ENCODE measurements at regions of chr17 and their contacts with region 1.

Region 1: GRCh38 chr17:78369791-78370381 is 8.6 kb upstream of the PGS1 start:
- DNase-seq: no peak
- ATAC-seq: no peak
- H3K4me3 ChIP-seq: no peak overlapping the region
- H3K27ac ChIP-seq: no peak overlapping the region
- H3K4me1 ChIP-seq: peaks cover 10% of the 10 kb centered on the region
- H3K27me3 ChIP-seq: no peaks in the 10 kb centered on the region
- CTCF ChIP-seq: no peak

Region 2: DNA sequence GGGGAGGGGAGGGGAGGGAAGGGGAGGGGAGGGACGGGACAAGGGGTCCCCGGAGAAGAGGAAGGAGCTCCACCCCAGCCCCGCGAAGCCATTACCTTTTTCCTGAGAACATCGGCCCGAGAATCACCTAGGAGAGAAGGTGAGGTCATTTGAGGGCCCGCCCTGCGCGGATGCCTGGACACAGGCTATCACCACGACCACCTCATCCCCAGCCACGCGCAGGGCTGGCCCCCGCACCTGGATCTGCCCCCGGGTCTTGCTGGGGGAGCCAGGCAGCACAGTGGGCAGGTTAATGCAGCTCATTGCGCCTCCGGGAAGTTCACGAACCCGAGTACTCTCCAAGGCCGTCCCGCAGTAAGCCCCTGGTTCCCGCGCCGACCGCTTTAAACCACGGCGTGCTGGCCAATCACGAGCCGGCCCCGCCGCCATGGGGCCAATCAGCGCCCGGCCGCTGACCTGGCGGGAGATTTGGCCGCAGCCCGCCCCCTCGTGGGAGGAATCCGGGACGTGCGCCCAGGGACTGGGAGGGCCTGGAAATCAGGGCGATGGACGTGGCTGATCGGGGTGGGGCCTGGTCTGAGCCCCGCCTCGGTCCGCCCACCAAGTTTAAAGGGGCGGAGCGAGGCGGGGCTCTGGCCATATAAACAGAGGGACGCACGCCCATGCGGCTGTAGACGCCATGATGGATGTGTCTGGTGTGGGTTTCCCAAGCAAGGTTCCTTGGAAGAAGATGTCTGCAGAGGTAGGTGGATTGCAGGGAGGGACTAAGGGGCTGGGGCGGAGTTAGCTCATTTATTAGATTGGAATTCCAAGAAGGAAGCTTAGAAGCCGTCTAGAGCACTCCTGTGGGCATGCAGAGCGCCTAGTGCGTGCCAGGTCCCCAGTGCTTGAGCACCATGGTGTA is 182.9 kb before region 1 on chr17 and contains the starts of genes AFMID and TK1:
- CTCF ChIA-PET with region 1: no interaction called
- POLR2A ChIA-PET with region 1: no interaction called
- intact Hi-C with region 1: no loop called
- DNase-seq: peak; percentile 100
- ATAC-seq: peak; percentile 90
- H3K4me3 ChIP-seq: peak within 1 kb of the TSS; percentile 77
- H3K27ac ChIP-seq: peak within 1 kb of the TSS; percentile 45
- H3K4me1 ChIP-seq: peaks cover 24% of the 10 kb centered on the region
- H3K27me3 ChIP-seq: no peaks in the 10 kb centered on the region
- CTCF ChIP-seq: peak; percentile 76
- total RNA-seq, gene AFMID: 53.1 and 58.9 TPM in 2 replicates
- total RNA-seq, gene TK1: 340 and 430 TPM in 2 replicates

Region 3: GRCh38 chr17:78231991-78232858 is 137.7 kb before region 1 on chr17:
- CTCF ChIA-PET with region 1: no interaction called
- POLR2A ChIA-PET with region 1: no interaction called
- intact Hi-C with region 1: no loop called
- DNase-seq: no peak
- ATAC-seq: peak; percentile 29; the same call in 1 of the 2 replicates
- H3K4me3 ChIP-seq: no peak overlapping the region
- H3K27ac ChIP-seq: no peak overlapping the region
- H3K4me1 ChIP-seq: 0 out of 2 replicates have a peak, but pooled peaks cover under 1% of the 10 kb centered on the region
- H3K27me3 ChIP-seq: peaks cover 3% of the 10 kb centered on the region; the same call in 1 of the 2 replicates
- CTCF ChIP-seq: no peak

Region 4: GRCh38 chr17:78383725-78384471 is 14.0 kb after region 1 on chr17:
- CTCF ChIA-PET with region 1: no interaction called
- POLR2A ChIA-PET with region 1: interaction called, 10 read pairs
- intact Hi-C with region 1: no loop called
- DNase-seq: peak; percentile 42
- ATAC-seq: peak; percentile 65
- H3K4me3 ChIP-seq: no peak overlapping the region
- H3K27ac ChIP-seq: peak overlapping the region; percentile 16; the same call in 1 of the 2 replicates
- H3K4me1 ChIP-seq: peaks cover 41% of the 10 kb centered on the region
- H3K27me3 ChIP-seq: no peaks in the 10 kb centered on the region
- CTCF ChIP-seq: no peak

Measured in PC-3 (cell line).